PC-9 (cell line): ENCODE measurements at regions of chr13 and their contacts with region 1.

Region 1: GRCh38 chr13:39527961-39528660 is 74.9 kb downstream of the LHFPL6 start:
- DNase-seq: peak; percentile 47 to 78
- H3K4me3 ChIP-seq: no peak overlapping the region
- H3K27ac ChIP-seq: peak overlapping the region; percentile 30
- H3K4me1 ChIP-seq: peaks cover 34% of the 10 kb centered on the region
- H3K27me3 ChIP-seq: no peaks in the 10 kb centered on the region
- CTCF ChIP-seq: no peak

Region 2: DNA sequence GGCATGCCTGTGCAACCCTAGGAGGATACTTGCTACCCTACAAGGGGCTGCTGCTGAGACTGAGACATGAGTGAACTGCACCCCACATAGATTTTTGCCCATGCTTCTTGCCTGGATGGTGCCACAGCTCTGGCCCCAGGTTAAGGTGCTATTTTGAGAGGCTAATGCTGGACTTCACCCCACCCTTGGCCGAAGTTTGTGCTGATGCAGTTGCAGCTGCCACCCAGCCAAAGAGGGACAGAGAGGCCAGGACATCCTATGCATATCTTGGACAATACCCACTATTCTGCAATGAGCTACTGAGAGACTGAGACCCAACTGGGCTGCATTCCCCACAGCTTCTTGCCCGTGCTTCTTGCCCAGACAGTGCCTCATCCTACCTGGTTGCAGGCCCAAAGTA is 455.3 kb before region 1 on chr13:
- CTCF ChIA-PET with region 1: no interaction called
- POLR2A ChIA-PET with region 1: no interaction called
- intact Hi-C with region 1: no loop called
- DNase-seq: no peak
- H3K4me3 ChIP-seq: no peak overlapping the region
- H3K27ac ChIP-seq: no peak overlapping the region
- H3K4me1 ChIP-seq: no peaks in the 10 kb centered on the region
- H3K27me3 ChIP-seq: no peaks in the 10 kb centered on the region
- CTCF ChIP-seq: no peak

Region 3: DNA sequence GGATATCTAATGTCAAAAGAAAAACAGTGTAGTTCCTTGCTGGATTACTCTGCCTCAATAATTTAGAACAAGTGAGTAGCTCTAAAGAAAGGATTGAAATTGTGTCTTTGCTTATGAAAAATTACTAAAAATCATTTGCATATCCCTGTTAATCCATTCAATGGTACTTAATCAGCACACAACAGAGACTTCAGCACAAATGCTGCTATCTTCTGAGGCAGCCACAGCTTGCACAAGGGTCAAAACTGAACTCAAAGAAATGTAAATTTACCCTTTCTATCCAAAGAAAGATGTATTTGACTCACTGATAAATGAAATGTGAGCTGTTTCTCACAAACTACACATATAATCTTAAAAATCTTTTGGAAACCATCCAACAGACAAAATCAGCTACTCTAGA is 41.4 kb before region 1 on chr13:
- CTCF ChIA-PET with region 1: interaction called, 13 read pairs
- POLR2A ChIA-PET with region 1: no interaction called
- intact Hi-C with region 1: no loop called
- DNase-seq: no peak
- H3K4me3 ChIP-seq: no peak overlapping the region
- H3K27ac ChIP-seq: no peak overlapping the region
- H3K4me1 ChIP-seq: no peaks in the 10 kb centered on the region
- H3K27me3 ChIP-seq: no peaks in the 10 kb centered on the region
- CTCF ChIP-seq: no peak

Region 4: GRCh38 chr13:39552246-39552645 is 24.1 kb after region 1 on chr13:
- CTCF ChIA-PET with region 1: no interaction called
- POLR2A ChIA-PET with region 1: no interaction called
- intact Hi-C with region 1: no loop called
- DNase-seq: no peak
- H3K4me3 ChIP-seq: no peak overlapping the region
- H3K27ac ChIP-seq: no peak overlapping the region
- H3K4me1 ChIP-seq: no peaks in the 10 kb centered on the region
- H3K27me3 ChIP-seq: no peaks in the 10 kb centered on the region
- CTCF ChIP-seq: no peak

Region 5: DNA sequence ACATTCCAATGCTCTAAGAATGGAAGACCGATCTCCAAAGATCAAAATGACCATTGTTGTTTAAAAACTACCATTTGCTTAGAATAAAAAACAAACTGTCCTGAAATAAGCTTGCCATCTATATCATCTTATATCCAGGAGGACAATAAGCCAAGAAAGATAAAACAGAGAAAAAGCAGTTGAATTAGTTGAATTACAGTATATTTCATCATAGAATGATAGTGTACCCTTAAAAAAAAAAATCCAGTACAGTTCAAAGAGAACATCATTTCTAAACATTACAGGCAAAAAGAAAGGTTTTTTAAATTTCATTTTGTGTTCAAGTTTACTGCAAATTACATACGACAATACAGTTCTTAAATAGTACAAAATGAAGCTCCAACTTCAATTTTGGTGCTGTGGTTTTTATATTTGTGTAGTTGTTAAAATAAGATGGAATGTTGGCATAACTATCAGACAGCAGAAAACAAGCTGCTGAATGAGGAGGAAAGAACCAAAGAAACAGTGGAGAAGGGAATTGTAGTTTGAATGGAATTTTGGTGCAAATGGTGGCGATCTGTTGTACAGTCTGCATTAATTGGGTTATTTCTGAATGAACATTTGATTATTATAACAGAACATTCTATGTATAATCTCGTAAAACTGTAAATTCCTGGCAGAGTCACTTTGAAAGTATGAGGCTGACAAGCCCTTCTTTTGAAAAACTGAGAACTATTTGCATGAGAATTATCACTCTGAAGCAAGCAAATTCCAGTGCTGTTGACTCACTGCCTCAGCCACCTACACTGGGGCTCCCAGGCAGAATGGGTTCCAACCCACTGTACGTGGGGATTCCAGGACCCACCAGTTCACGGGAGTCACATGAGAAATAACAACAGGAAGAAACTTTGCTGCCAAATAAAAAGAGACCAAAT is 37.2 kb after region 1 on chr13:
- CTCF ChIA-PET with region 1: no interaction called
- POLR2A ChIA-PET with region 1: no interaction called
- intact Hi-C with region 1: loop called (anchors 5 kb)
- DNase-seq: peak; percentile 56 to 91
- H3K4me3 ChIP-seq: peak overlapping the region; percentile 31
- H3K27ac ChIP-seq: peak overlapping the region; percentile 85
- H3K4me1 ChIP-seq: peaks cover 28% of the 10 kb centered on the region
- H3K27me3 ChIP-seq: no peaks in the 10 kb centered on the region
- CTCF ChIP-seq: no peak